ENCODE measurements at regions of chr12 and their contacts with region 1.

Region 1: GRCh38 chr12:104896146-104896545 is 61.9 kb downstream of the SLC41A2 start:
- DNase-seq: peak in 1 of 2 experiments; percentile 24
- H3K4me3 ChIP-seq: no peak overlapping the region
- H3K4me3 Mint-ChIP-seq: peak overlapping the region; percentile 33
- H3K27ac Mint-ChIP-seq: peak overlapping the region; percentile 49
- H3K4me1 ChIP-seq: peaks cover 19% of the 10 kb centered on the region
- H3K4me1 Mint-ChIP-seq: peaks cover 18% of the 10 kb centered on the region
- H3K27me3 ChIP-seq: no peaks in the 10 kb centered on the region
- H3K27me3 Mint-ChIP-seq: no peaks in the 10 kb centered on the region
- CTCF ChIP-seq: no peak

Region 2: DNA sequence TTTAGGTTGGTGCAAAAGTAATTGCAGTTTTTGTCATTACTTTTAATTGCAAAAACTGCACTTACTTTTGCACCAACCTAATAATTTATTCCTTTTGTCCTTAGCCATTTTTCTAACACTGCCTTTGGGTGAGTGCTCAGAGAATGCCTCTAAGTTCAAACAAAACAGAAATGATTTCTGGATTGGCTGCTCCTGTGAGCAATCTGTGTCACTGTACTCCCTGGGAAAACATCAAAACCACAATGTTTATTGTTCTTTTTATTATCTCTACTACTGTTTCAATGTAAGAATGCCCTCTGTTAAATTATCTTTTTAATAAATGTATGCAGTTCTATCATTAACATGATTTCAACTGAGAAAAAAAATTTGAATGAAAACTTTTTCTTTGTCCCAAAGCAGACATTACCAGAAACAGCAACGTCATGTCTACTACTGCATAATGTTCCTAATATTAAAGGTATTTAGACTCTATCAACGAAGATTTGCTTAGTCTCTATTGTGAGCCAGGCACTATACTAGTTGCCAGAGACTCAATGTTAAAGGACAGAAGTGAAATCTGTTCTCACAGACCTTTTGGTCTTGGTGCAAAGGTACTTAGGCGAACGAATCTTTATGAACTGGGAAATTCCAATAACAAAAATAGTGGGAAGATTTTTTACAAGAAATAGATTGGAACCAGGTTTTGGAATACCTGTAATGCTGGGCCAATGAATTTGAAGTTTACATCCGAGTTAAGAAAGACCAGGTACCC is 55.8 kb after region 1 on chr12:
- CTCF ChIA-PET with region 1: no interaction called
- POLR2A ChIA-PET with region 1: no interaction called
- intact Hi-C with region 1: loop called (anchors 5 kb)
- DNase-seq: no peak
- H3K4me3 ChIP-seq: no peak overlapping the region
- H3K4me3 Mint-ChIP-seq: no peak overlapping the region
- H3K27ac Mint-ChIP-seq: no peak overlapping the region
- H3K4me1 ChIP-seq: peaks cover 39% of the 10 kb centered on the region
- H3K4me1 Mint-ChIP-seq: peaks cover 29% of the 10 kb centered on the region
- H3K27me3 ChIP-seq: no peaks in the 10 kb centered on the region
- H3K27me3 Mint-ChIP-seq: no peaks in the 10 kb centered on the region
- CTCF ChIP-seq: no peak

Region 3: DNA sequence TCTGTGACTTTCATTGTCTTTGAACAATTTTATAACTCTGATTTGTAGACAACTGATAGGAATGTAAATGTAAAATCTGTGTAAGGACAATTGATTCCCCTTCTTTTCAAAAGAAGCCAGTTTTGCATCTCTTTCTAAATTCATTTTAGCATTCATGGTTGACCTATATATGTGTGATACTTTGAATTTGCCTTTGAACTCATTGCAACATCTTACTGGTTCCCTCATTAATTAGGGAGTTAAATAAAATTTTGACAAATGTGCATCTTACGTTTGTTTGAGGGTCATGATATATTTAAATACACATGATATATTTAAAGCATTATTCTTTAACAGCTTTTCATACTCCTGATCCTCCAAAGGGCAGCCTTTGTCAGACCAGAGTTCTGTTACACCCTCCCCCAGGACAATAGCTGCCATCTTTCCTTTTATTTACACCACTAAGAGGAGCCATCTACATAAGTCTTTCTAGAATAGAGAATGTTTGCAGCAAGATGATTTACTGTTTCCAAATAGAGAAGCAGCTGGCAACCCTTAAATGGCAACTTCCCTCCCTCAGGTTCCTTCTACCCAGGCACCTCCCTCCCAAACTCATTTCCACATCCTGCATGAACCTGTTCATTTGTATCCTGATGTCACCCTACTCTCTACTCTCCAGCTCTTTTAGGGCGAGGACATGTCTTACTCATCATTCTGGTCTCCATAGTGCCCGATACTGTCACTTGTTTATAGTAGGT is 380.0 kb after region 1 on chr12:
- CTCF ChIA-PET with region 1: no interaction called
- POLR2A ChIA-PET with region 1: no interaction called
- intact Hi-C with region 1: no loop called
- DNase-seq: no peak
- H3K4me3 ChIP-seq: no peak overlapping the region
- H3K4me3 Mint-ChIP-seq: no peak overlapping the region
- H3K27ac Mint-ChIP-seq: no peak overlapping the region
- H3K4me1 ChIP-seq: peaks cover 32% of the 10 kb centered on the region
- H3K4me1 Mint-ChIP-seq: peaks cover 24% of the 10 kb centered on the region
- H3K27me3 ChIP-seq: no peaks in the 10 kb centered on the region
- H3K27me3 Mint-ChIP-seq: no peaks in the 10 kb centered on the region
- CTCF ChIP-seq: no peak